ENCODE measurements at regions of chr16 and their contacts with region 1.

Region 1: GRCh38 chr16:57863434-57864160 is 61.3 kb upstream of the KIFC3 start:
- DNase-seq: peak; percentile 79
- H3K27ac ChIP-seq: 0 out of 2 replicates have a peak overlapping the region, but pooled peaks have one; percentile 18
- CTCF ChIP-seq: peak; percentile 82

Region 2: GRCh38 chr16:57757326-57757786 is 106.2 kb before region 1 on chr16:
- CTCF ChIA-PET with region 1: interaction called, 35 read pairs
- POLR2A ChIA-PET with region 1: interaction called, 8 read pairs
- DNase-seq: peak; percentile 86
- H3K27ac ChIP-seq: peak overlapping the region; percentile 90
- CTCF ChIP-seq: peak; percentile 96

Region 3: DNA sequence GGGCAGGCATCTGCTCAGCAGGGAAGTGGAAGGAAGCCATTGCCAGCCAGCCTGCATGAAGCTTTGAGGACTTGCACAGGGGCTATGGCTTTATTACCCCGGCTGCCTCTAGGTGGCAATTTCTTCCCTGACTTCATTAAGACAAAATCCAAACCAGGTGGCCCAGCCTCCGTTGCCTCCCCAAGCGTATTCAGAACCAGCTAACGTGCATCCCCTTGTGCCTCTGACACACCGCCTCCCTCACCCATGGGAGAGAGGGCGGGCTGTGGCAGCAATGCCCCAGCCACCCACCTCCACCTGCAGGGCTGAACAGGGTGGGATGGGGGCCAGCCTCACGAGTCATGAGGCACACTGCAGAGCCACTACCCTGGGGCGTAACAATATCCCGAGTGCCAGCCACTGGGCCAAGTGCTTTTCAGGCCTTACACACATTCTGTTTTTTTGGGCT is 68.1 kb before region 1 on chr16:
- CTCF ChIA-PET with region 1: interaction called, 11 read pairs
- POLR2A ChIA-PET with region 1: no interaction called
- DNase-seq: peak; percentile 55
- H3K27ac ChIP-seq: peak overlapping the region; percentile 90
- CTCF ChIP-seq: peak; percentile 56

Region 4: DNA sequence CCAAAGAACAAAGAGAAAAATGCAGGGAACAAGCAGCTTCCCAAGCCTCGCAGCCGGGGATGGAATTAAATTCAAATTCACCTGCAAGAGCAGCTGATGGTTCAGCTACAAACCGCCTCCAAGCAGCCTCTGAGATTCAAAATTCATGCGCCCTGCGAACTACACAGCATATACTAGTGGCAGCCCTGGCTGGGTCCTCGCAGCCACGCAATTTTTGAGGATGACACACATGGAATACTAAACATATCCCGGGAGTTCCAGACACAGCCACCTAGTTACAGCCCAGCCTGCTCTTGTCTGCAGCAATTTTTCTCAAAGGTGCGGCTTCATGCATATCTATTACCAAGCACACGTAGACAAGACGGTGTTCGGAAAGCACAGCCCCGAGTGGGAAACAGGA is 25.4 kb before region 1 on chr16:
- CTCF ChIA-PET with region 1: no interaction called
- POLR2A ChIA-PET with region 1: no interaction called
- DNase-seq: no peak
- H3K27ac ChIP-seq: no peak overlapping the region
- CTCF ChIP-seq: no peak

Region 5: GRCh38 chr16:57893559-57894389 is 30.2 kb after region 1 on chr16:
- CTCF ChIA-PET with region 1: no interaction called
- POLR2A ChIA-PET with region 1: no interaction called
- DNase-seq: peak; percentile 75
- H3K27ac ChIP-seq: peak overlapping the region; percentile 60
- CTCF ChIP-seq: no peak

Region 6: DNA sequence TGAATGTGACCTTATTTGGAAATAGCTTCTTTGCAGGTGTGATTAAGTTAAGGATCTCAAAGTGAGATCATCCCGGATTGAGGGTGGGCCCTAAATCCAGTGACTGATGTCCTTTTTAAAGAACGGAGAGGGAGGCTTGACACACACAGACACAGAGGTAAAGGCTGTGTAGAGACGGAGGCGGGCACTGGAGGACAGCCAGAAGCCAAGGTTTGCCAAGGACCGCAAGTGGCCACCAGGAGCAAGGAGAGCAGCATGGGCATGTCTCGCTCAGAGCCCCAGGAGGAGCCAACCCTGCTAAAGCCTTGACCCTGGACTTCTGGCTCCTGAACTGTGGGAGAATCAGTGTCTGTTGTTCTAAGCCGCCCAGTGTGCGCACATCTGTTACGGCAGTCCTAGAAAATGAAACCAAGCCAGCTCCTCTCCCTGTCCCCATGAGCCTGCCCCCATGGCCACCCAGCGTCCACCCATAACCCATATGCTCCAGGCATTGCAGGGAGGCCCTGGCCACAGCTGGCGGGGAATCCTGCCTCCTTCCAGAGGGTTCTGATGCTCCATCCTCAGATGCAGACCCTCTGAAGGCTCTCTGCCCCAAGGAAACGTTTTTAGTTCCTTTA is 92.1 kb after region 1 on chr16:
- CTCF ChIA-PET with region 1: no interaction called
- POLR2A ChIA-PET with region 1: no interaction called
- DNase-seq: no peak
- H3K27ac ChIP-seq: peak overlapping the region; percentile 45
- CTCF ChIP-seq: 0 out of 2 replicates have a peak, but pooled peaks have one; percentile 12

Measured in RWPE1 (cell line).